ENCODE measurements at regions of chr12 and their contacts with region 1.

Region 1: GRCh38 chr12:98644711-98645402 is at the starts of genes APAF1 and IKBIP:
- DNase-seq: peak; percentile 94
- H3K4me3 Mint-ChIP-seq: peak within 1 kb of the TSS; percentile 97
- H3K27ac Mint-ChIP-seq: peak within 1 kb of the TSS; percentile 98
- H3K4me1 Mint-ChIP-seq: peaks cover 32% of the 10 kb centered on the region
- H3K27me3 Mint-ChIP-seq: no peaks in the 10 kb centered on the region
- total RNA-seq, gene APAF1: 28.3 and 31.2 TPM in 2 replicates
- total RNA-seq, gene IKBIP: 39.9 and 41.1 TPM in 2 replicates

Region 2: DNA sequence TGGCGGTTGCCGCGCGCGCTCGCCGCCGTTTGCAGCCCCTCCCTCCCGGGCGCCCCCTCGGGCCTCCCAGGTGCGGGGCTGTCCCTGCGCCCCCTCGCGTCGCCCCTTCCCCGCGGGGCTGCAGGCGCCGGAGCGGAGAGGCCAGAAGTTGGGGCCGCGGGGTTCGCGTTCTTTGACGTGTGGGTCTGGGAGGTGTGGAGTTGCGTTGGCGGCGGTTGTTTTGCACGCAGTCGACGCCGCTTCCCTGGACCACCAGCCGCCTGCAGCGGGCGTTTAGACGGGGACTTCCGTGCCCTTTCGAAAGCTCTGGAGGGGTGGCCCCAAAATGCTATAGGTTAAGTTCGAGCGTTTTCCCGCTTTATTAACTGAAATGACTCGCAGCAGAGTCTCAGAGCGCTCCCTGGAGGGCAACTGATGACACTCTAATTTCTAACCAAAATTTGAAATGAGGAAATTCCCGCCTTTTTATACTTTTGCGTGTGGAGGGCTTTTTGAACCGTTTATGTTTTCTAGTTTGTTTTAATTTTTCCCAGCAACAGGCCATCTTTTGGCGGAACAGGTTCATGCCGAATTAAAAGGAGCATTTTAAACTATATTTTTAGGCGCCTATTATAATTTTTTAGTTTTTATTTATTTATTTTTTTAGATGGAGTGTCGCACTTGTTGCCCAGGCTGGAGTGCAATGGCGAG is 128.5 kb before region 1 on chr12:
- intact Hi-C with region 1: loop called (anchors 2 kb)
- DNase-seq: peak; percentile 83
- H3K4me3 Mint-ChIP-seq: peak overlapping the region; percentile 92
- H3K27ac Mint-ChIP-seq: peak overlapping the region; percentile 98
- H3K4me1 Mint-ChIP-seq: peaks cover 22% of the 10 kb centered on the region
- H3K27me3 Mint-ChIP-seq: no peaks in the 10 kb centered on the region

Region 3: DNA sequence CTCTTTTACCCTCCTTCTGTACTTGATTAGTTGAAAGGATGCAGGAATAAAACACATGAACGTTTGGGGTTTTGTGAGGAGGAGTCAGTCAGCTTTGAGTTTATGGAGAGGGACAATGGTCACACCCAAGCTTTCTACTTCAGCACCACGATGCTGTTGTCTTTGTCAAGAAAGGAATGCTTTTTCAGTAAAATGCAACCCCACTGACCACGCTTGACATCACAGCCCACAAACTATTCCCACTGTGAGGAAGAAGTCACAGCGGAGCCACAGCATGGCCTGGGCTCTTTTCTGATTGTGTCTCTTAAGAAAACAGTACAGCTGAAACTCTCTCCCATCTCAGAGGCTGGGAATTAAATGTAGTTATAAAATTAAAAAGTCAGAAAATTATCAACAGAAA is 135.4 kb after region 1 on chr12:
- intact Hi-C with region 1: no loop called
- DNase-seq: no peak
- H3K4me3 Mint-ChIP-seq: no peak overlapping the region
- H3K27ac Mint-ChIP-seq: no peak overlapping the region
- H3K4me1 Mint-ChIP-seq: no peaks in the 10 kb centered on the region
- H3K27me3 Mint-ChIP-seq: peaks cover 14% of the 10 kb centered on the region

Measured in activated T-helper 2 cell treated with anti-CD3 and anti-CD28 coated beads, Interferon-gamma antibody, Interleukin-2, Interleukin-4, amounts not matched to agents 10 μg/mL and 5 μg/mL and 100 μg/mL, durations not matched to agents 14 hours and 24 hours and 36 hours (primary cell).